ENCODE measurements at regions of chr5 and their contacts with region 1.

Region 1: GRCh38 chr5:153974131-153974812 is 64.4 kb downstream of the FAM114A2 start:
- DNase-seq: no peak
- H3K4me3 ChIP-seq: no peak overlapping the region
- CTCF ChIP-seq: peak; percentile 63

Region 2: GRCh38 chr5:153987306-153987705 is 13.0 kb after region 1 on chr5:
- CTCF ChIA-PET with region 1: interaction called, 37 read pairs
- POLR2A ChIA-PET with region 1: no interaction called
- DNase-seq: no peak
- H3K4me3 ChIP-seq: no peak overlapping the region
- CTCF ChIP-seq: no peak

Region 3: GRCh38 chr5:154610321-154611154 is 636.3 kb after region 1 on chr5:
- CTCF ChIA-PET with region 1: interaction called, 15 read pairs
- POLR2A ChIA-PET with region 1: no interaction called
- DNase-seq: no peak
- H3K4me3 ChIP-seq: peak overlapping the region; percentile 36
- CTCF ChIP-seq: peak; percentile 98

Region 4: DNA sequence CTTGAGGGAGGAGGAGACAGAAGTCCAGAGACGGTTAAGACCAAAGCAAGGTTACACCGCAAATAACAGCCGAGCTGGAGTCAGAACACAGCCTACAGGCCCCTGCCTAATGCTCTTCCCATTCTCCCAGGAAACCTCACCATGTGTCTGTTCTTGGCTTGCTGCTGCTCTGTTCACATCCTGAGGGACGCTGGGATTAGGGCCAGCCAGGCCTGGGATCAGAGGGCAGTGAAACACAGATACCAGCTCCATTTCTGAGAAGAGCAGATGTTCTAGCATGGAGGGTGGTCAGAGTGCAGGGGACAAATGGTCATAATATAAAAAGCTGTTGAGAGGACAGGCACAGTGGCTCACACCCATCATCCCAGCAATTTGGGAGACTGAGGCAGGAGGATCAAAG is 656.1 kb after region 1 on chr5:
- CTCF ChIA-PET with region 1: interaction called, 19 read pairs
- POLR2A ChIA-PET with region 1: no interaction called
- DNase-seq: no peak
- H3K4me3 ChIP-seq: no peak overlapping the region
- CTCF ChIP-seq: no peak